ENCODE measurements at regions of chr2 and their contacts with region 1.

Region 1: GRCh38 chr2:47520825-47521665 is 118.1 kb downstream of the MSH2 start:
- DNase-seq: peak; percentile 70
- H3K4me3 Mint-ChIP-seq: peak overlapping the region; percentile 89
- H3K27ac Mint-ChIP-seq: peak overlapping the region; percentile 97
- H3K4me1 Mint-ChIP-seq: peaks cover 20% of the 10 kb centered on the region
- H3K27me3 Mint-ChIP-seq: no peaks in the 10 kb centered on the region

Region 2: DNA sequence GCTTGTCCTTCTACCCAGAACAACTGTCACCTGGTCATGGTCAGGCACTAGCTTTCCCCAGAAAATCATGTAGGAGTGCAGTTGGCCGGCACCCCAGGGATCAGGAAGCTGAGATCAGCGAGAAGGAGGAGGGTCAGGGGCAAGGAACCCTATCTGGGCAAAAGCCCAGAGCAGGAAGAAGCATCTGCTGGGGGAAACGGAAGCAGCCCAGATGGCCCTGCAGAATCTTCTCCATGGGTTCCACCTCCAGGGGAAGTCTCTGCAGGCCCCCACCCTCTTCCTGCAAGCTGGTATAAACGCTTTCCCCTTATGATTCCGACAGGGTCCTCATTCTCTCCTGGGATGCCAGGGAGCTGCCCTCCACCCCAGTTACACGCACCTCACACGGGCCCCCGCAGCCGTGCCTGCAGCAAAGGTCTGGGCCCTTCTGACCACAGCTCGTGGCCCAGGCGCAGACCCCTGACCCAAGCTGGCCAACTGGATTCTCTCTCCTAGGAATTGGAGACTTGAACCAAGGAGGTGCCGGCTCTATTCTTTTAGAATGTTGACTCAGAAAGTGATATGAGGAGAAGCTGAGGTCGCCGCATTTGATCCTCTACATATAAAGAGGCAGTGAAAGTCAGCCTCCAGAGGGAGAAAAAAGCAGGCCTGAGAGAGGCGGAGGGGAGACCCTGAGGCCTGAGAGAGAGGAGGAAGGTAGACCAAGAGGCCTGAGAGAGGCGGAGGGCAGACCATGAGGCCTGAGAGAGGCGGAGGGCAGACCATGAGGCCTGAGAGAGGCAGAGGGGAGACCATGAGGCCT is 437.0 kb before region 1 on chr2:
- intact Hi-C with region 1: no loop called
- DNase-seq: no peak
- H3K4me3 Mint-ChIP-seq: no peak overlapping the region
- H3K27ac Mint-ChIP-seq: no peak overlapping the region
- H3K4me1 Mint-ChIP-seq: no peaks in the 10 kb centered on the region
- H3K27me3 Mint-ChIP-seq: peaks cover 2% of the 10 kb centered on the region

Region 3: GRCh38 chr2:47402805-47403608 is 118.0 kb before region 1 on chr2 and contains the start of gene MSH2:
- intact Hi-C with region 1: loop called (anchors 1 kb)
- DNase-seq: peak; percentile 91
- H3K4me3 Mint-ChIP-seq: peak within 1 kb of the TSS; percentile 97
- H3K27ac Mint-ChIP-seq: peak within 1 kb of the TSS; percentile 96
- H3K4me1 Mint-ChIP-seq: peaks cover 28% of the 10 kb centered on the region
- H3K27me3 Mint-ChIP-seq: no peaks in the 10 kb centered on the region
- total RNA-seq, gene MSH2: 73.3 TPM in 2 replicates

Region 4: DNA sequence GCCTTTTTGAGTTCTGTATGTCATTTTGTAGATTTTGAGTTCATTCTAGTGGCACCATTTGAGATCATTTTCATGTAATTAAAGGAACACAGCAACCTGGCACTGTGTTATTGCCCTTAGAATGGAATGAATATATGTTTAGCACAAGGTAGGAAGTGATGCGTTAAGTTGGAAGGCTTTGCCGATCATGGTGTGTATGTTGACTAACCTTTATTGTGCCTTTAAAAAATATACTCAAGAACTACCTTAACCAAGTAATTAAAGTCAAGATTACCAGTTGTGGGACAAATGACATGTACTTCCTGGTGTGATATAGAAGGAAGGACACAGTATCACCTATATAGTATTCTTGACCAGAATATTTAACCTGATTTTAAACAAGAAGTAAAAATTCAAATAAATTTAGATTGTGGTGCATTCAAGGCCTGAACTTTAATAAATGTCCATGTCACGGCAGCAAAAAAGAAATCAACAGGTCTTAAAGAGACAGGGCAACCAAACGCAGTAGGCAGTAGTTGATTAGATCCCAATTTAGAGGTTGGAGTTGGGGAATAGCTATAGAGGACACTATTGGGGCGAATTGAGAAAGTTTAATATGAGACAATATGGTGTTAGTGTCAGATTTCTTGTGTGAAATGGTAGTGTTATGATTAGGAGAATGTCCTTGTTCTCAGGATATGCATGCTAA is 49.5 kb before region 1 on chr2:
- intact Hi-C with region 1: loop called (anchors 5 kb)
- DNase-seq: no peak
- H3K4me3 Mint-ChIP-seq: no peak overlapping the region
- H3K27ac Mint-ChIP-seq: no peak overlapping the region
- H3K4me1 Mint-ChIP-seq: no peaks in the 10 kb centered on the region
- H3K27me3 Mint-ChIP-seq: no peaks in the 10 kb centered on the region

Region 5: GRCh38 chr2:47501374-47502200 is 19.5 kb before region 1 on chr2:
- intact Hi-C with region 1: loop called (anchors 1 kb)
- DNase-seq: no peak
- H3K4me3 Mint-ChIP-seq: peak overlapping the region; percentile 25
- H3K27ac Mint-ChIP-seq: peak overlapping the region; percentile 81
- H3K4me1 Mint-ChIP-seq: peaks cover 18% of the 10 kb centered on the region
- H3K27me3 Mint-ChIP-seq: no peaks in the 10 kb centered on the region

Region 6: DNA sequence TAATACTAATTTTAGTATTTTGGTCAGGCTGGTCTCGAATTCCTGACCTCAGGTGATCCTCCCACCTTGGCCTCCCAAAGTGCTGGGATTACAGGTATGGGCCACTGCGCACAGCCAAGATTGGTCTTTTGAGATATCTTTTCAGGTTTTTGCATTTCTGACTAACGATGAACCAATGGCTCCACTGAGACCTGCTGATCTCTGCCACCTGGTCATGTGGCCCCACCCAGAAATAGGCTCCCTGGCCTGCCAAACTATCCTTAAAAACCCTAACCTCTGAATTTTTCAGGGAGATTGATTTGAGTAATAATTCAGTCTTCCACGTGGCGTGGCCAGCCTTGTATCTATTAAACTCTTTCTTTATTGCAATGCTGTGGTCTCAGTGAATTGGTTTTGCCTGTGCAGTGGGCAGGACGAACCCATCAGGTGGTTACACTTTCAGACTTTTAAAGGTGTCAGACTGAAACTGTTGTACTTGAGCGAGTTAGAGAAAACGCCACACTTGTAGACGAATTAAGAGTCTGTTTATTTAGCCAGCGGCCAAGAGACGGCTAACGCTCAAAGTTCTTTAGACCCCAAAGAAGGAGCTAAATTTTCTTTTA is 176.1 kb after region 1 on chr2:
- intact Hi-C with region 1: no loop called
- DNase-seq: no peak
- H3K4me3 Mint-ChIP-seq: no peak overlapping the region
- H3K27ac Mint-ChIP-seq: no peak overlapping the region
- H3K4me1 Mint-ChIP-seq: no peaks in the 10 kb centered on the region
- H3K27me3 Mint-ChIP-seq: peaks cover 3% of the 10 kb centered on the region

Measured in activated T-helper 1 cell treated with anti-CD3 and anti-CD28 coated beads, Interleukin-12 subunit alpha, Interleukin-12 subunit beta, Interleukin-2, Interleukin-4 antibody, amounts not matched to agents 30 ng/mL and 10 ng/mL and 1 ng/mL, durations not matched to agents 14 hours and 24 hours and 36 hours (primary cell).